ENCODE measurements at regions of chr6 and their contacts with region 1.

Region 1: DNA sequence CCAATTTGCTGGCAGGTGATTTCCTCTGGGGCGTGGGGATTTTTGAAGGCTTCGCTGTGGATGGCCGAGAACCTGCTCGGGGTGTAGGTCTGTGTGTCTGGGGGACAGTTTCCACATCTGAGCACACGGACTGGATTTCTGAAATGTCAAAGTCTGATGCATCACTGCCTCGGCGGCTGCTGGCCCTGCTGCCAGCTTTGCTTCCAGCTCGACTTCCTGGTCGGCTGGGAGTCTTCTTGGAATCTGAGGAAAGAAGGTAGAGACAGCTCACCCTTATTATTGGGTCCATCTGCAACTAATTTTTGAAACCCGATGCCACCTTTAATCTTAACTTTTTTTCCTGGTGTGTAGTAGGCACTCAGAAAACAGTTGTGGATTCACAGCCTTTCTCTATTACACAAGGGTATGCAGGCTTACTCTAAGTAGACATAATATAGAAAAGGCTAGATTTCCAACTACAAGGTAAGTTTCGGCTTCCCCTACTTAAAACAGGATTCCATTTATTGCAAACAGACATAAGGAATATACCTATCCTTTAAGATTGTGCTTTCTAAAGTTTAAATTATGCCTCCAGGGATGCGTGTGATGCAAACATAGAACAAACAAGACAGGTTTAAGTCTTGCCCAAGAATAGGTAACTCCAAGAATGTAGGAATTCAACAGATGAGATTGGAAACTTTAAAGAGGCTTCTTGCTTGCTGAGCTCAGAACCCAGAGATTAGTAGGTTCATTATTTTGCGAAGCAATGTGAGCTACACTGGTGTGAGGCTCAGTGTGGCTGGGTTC is 183.5 kb downstream of the DST start:
- DNase-seq: no peak
- H3K4me3 Mint-ChIP-seq: no peak overlapping the region
- H3K27ac Mint-ChIP-seq: no peak overlapping the region
- H3K4me1 Mint-ChIP-seq: peaks cover 8% of the 10 kb centered on the region
- H3K27me3 Mint-ChIP-seq: no peaks in the 10 kb centered on the region

Region 2: GRCh38 chr6:56172144-56172543 is 287.1 kb before region 1 on chr6:
- CTCF ChIA-PET with region 1: no interaction called
- POLR2A ChIA-PET with region 1: no interaction called
- intact Hi-C with region 1: no loop called
- DNase-seq: no peak
- H3K4me3 Mint-ChIP-seq: no peak overlapping the region
- H3K27ac Mint-ChIP-seq: no peak overlapping the region
- H3K4me1 Mint-ChIP-seq: no peaks in the 10 kb centered on the region
- H3K27me3 Mint-ChIP-seq: no peaks in the 10 kb centered on the region

Region 3: DNA sequence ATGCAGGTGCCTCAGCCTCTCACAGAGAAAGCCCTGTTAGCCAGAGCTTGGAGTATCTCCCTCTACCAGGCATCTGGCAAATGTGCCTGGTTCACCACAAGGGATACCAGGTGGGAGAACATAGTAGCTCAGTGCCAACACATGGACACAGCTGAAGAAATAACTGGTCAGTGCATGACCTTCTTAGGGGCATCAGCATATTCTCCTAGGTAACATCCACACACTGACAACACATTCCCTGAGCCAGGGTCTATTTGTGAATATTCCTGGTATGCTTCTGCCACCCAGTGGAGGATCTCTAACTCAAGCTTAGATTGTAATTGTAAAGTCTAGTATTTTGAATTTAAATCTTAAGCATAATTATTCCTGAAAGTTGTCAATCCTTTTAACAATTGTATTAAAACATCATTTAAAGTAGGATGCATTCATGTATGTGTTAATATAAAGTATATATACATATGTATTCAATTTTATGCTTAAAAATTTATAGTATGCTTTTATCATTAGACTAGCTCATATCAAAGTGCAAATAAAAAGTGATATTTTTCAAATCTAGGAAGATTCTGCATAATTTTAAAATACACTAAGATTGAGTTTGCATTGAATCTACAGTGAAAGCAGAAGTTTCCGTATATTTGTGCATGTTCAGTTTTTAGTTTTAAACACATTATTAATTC is 166.6 kb before region 1 on chr6:
- CTCF ChIA-PET with region 1: no interaction called
- POLR2A ChIA-PET with region 1: no interaction called
- intact Hi-C with region 1: no loop called
- DNase-seq: no peak
- H3K4me3 Mint-ChIP-seq: no peak overlapping the region
- H3K27ac Mint-ChIP-seq: no peak overlapping the region
- H3K4me1 Mint-ChIP-seq: no peaks in the 10 kb centered on the region
- H3K27me3 Mint-ChIP-seq: no peaks in the 10 kb centered on the region

Region 4: DNA sequence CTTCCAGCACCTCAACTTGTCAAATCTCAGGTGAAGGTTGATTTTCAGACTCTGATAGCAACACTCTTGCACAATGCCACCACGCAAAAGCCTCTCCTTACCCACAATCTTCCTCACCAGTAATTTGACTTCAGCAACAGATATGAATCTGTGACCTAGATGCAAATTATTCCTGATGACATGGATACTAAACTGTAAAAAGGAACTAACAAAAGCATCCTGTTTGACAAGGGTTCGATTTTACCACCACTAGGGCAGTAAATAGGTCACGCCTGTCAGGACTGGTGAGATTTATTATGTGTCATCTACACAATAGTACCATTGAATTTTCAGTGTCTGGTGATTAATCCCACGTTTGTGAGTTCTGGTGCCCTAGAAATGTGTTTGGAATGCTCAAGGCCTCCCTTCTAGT is 77.4 kb before region 1 on chr6:
- CTCF ChIA-PET with region 1: no interaction called
- POLR2A ChIA-PET with region 1: no interaction called
- intact Hi-C with region 1: no loop called
- DNase-seq: no peak
- H3K4me3 Mint-ChIP-seq: no peak overlapping the region
- H3K27ac Mint-ChIP-seq: no peak overlapping the region
- H3K4me1 Mint-ChIP-seq: no peaks in the 10 kb centered on the region
- H3K27me3 Mint-ChIP-seq: peaks cover 2% of the 10 kb centered on the region

Region 5: DNA sequence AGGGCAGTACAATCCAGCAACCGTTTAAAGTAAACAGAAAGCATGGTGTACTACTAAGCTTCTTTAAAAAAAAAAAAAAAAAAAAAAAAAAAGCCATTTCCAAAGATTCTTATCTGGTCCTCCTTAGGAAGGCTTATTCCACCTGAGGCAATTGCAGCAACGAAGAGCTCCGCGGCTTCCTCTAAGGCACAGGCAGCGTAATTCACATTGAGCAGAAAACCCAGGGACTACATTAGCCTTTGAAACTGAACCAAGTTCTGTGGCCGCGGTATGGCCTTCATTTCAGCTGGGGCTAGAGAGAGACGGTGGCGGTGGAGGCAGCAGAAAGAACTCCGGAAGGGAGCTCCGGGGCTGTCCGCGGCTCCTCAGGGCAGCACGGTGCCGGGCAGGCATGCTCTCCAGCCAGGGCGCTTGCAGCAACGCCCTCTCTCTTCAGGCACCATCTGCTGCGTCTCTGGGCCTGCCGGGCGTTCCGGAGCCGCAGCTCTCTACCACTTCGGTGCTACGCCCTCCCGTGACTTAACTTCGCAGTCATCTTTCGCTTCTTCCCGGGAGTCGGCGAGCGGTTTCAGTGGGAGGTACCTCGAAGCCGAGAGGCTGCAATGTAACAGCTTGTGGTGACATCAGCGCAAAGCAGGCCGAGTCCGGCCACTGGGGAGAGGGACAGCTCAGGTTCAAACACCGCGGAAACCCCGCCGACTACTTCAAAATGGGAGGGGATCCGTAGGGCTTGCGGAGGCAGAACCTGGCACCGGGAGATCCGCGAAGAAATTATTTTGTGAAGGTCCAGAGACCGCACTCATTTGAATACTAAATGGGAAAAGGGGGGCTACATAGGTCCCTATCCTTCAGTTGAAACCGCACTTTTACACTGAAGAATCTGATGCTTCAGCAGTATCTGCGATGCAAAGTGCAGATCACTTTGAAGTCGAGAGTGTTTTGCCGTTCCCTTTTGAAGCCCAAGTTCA is 83.4 kb after region 1 on chr6:
- CTCF ChIA-PET with region 1: no interaction called
- POLR2A ChIA-PET with region 1: no interaction called
- intact Hi-C with region 1: loop called (anchors 5 kb)
- DNase-seq: peak; percentile 84
- H3K4me3 Mint-ChIP-seq: no peak overlapping the region
- H3K27ac Mint-ChIP-seq: no peak overlapping the region
- H3K4me1 Mint-ChIP-seq: no peaks in the 10 kb centered on the region
- H3K27me3 Mint-ChIP-seq: no peaks in the 10 kb centered on the region

Measured in activated CD4-positive, alpha-beta memory T cell treated with anti-CD3 and anti-CD28 coated beads for 36 hours (primary cell).